PC-3 (cell line): ENCODE measurements at regions of chr10 and their contacts with region 1.

Region 1: DNA sequence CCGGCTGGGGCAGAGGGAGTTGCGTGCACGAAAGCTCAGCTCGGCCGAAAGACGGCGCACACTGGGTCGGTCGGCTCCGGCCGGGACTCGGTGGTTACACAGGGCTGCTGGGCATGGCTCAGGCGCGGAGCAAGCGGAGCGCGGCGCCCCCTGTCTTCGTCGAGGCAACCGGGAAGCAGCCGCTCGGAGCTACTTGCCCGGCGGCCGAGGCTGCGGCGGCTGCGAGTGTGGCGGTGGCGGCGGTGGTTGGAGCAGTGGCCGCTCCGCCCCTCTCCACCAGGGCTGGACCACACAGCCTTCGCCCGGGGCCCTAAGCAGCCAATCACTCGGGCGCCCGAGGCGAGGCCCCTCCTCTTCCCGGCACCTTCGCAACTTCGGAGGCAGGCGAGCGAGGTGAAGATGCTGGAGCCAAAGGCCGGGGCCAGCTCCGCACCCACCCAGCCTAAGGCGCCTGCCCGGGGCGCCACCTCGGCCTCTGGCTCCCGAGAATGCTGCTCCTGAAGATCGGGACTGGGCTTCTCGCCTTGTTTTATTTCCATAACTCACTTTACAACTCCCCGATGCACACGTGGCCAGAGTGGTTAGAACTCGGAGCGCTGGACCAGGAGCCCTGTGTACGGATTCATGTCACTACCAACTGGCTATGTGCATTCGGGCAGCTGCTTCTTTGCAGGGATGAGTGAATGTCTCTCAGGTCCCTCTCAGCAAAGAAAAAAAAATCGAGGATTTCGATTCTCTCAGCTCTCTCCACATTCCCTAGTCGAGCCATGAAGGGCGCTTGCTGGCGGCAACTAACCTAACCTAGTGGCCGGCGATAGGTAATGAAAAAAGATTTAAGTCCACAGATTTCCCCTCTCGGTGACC is at the start of gene TLL2:
- DNase-seq: peak; percentile 69
- ATAC-seq: peak; percentile 84
- H3K4me3 ChIP-seq: peak within 1 kb of the TSS; percentile 69
- H3K27ac ChIP-seq: no peak within 1 kb of the TSS
- H3K4me1 ChIP-seq: peaks cover 18% of the 10 kb centered on the region
- H3K27me3 ChIP-seq: peaks cover 18% of the 10 kb centered on the region
- CTCF ChIP-seq: peak; percentile 44
- total RNA-seq, gene TLL2: 0.18 TPM in 1 of 2 replicates, not detected in the other

Region 2: DNA sequence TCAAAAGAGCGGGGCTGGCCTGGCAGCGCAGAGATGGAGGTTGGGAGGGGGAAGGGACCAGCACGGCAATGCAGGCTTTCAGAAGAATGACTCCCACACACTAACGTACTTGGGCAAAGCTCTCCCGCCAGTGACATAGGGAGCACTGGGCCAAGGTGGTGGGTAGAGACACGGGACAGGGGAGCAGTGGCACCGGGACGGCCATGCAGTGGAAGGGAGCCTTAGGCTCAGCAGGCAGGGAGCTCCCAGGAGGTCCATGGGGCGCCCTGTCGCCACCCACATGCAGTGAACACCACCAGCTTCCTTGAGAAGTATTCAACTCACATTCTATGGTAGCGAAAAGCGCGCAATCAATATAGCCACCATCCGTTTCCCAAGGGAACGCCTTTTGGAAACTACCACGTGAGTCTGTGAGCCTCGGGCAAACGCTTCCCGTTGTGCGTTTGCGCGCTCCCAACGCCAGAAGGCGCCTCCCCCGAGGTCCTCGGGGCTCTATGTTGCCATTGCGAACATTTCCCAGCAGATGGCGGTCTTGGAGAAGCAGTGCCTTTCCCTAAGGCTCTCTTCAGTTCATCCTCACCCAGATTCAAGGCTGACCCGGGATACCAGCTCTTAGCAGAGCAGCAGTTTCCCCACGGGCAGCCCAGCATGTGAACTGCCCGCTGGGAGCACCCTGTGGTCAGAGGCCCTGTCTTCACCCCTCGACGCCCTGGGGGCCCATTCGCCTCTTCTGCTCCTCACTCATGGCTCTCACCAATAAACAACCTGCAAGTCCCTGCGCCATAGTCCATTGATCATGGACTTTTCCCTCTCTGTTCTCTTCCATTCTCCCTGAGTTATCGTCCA is 138.7 kb before region 1 on chr10:
- CTCF ChIA-PET with region 1: no interaction called
- POLR2A ChIA-PET with region 1: no interaction called
- intact Hi-C with region 1: loop called (anchors 5 kb)
- DNase-seq: peak; percentile 91
- ATAC-seq: peak; percentile 88
- H3K4me3 ChIP-seq: peak overlapping the region; percentile 57
- H3K27ac ChIP-seq: no peak overlapping the region
- H3K4me1 ChIP-seq: peaks cover 7% of the 10 kb centered on the region
- H3K27me3 ChIP-seq: no peaks in the 10 kb centered on the region
- CTCF ChIP-seq: peak; percentile 83

Region 3: GRCh38 chr10:96395931-96396877 is 117.7 kb before region 1 on chr10:
- CTCF ChIA-PET with region 1: no interaction called
- POLR2A ChIA-PET with region 1: no interaction called
- intact Hi-C with region 1: loop called (anchors 2 kb)
- DNase-seq: peak; percentile 62
- ATAC-seq: peak; percentile 80
- H3K4me3 ChIP-seq: no peak overlapping the region
- H3K27ac ChIP-seq: no peak overlapping the region
- H3K4me1 ChIP-seq: no peaks in the 10 kb centered on the region
- H3K27me3 ChIP-seq: peaks cover 86% of the 10 kb centered on the region
- CTCF ChIP-seq: peak; percentile 83